A549 (cell line): ENCODE measurements at regions of chr2 and their contacts with region 1.

Region 1: GRCh38 chr2:216679221-216680019 is 15.9 kb downstream of the IGFBP5 start:
- DNase-seq: no peak
- ATAC-seq: no peak
- H3K4me3 ChIP-seq: no peak overlapping the region
- H3K27ac ChIP-seq: no peak overlapping the region
- H3K4me1 ChIP-seq: peaks cover 19% of the 10 kb centered on the region; the same call in 2 of the 3 replicates
- CTCF ChIP-seq: no peak
- EP300 ChIP-seq: no peak
- POLR2A ChIP-seq: no peak
- RAD21 ChIP-seq: no peak

Region 2: DNA sequence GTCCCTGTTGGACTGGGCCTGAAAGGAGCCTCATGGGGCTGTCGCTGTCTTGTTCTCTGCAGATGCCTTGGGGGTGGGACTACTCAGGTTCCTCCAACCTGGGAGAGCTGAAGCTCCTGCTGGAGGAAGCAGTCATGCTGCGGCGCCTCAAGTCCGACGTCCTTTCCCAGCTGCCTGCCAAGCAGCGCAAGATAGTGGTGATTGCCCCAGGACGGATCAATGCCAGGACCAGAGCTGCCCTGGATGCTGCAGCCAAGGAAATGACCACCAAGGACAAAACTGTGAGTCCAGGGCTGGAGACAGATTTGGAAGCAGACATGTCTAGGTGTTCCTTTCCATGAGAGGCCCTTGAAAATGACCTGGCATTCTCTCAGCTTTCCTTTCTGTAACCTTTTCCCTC is 228.6 kb before region 1 on chr2:
- CTCF ChIA-PET with region 1: no interaction called
- POLR2A ChIA-PET with region 1: no interaction called
- DNase-seq: no peak
- ATAC-seq: no peak
- H3K4me3 ChIP-seq: no peak overlapping the region
- H3K27ac ChIP-seq: no peak overlapping the region
- H3K4me1 ChIP-seq: no peaks in the 10 kb centered on the region
- CTCF ChIP-seq: no peak
- EP300 ChIP-seq: no peak
- POLR2A ChIP-seq: no peak
- RAD21 ChIP-seq: no peak

Region 3: DNA sequence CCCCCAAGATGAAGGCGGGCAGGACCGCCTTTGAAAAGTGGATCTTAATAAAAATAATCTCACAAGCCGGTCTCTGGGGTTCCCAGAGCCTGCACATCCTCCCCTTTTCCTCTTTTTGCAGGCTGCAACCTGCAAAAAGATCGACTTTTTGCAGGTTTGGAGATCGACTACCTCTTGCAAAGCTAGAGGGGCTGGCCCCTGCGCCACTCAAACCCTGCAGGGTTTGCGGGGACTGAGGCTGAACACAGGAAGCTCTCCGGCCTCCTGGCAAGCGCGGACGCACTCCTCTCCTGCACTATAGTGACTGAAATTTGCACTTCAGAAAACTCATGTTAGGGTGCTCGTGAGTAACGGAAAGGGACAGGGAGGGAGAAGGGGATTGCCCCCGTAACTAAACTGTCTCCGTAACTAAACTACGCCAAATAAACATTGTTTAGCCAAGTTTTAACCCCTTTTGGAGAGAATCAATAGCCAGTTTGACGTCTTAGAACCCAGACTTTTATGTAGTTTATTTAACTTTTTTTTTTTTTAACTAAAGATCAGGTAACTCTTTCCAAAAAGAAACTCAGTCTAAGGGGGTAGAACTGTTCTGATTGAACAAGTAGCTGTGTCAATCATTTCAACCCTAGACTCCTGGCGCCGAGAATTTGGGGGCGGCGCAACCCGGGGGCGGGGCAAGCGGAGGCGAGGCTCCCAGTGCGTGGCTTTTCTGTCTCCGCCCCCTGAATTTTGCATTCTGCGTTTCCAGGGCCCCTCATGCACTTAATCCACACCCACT is 13.4 kb after region 1 on chr2:
- CTCF ChIA-PET with region 1: interaction called, 15 read pairs
- POLR2A ChIA-PET with region 1: no interaction called
- DNase-seq: peak; percentile 56 to 83
- ATAC-seq: peak; percentile 53 to 85; a peak in 5 of 6 replicates
- H3K4me3 ChIP-seq: peak overlapping the region; percentile 52
- H3K27ac ChIP-seq: peak overlapping the region in 1 of 2 experiments; percentile 55; a peak in 1 of 6 replicates
- H3K4me1 ChIP-seq: peaks cover 31% of the 10 kb centered on the region; the same call in 2 of the 3 replicates
- CTCF ChIP-seq: no peak
- EP300 ChIP-seq: no peak
- POLR2A ChIP-seq: no peak
- RAD21 ChIP-seq: no peak